Activated T-helper 2 cell treated with anti-CD3 and anti-CD28 coated beads, Interferon-gamma antibody, Interleukin-2, Interleukin-4, amounts not matched to agents 10 μg/mL and 5 μg/mL and 100 μg/mL, durations not matched to agents 14 hours and 24 hours and 36 hours (primary cell): ENCODE measurements at regions of chr4 and their contacts with region 1.

Region 1: DNA sequence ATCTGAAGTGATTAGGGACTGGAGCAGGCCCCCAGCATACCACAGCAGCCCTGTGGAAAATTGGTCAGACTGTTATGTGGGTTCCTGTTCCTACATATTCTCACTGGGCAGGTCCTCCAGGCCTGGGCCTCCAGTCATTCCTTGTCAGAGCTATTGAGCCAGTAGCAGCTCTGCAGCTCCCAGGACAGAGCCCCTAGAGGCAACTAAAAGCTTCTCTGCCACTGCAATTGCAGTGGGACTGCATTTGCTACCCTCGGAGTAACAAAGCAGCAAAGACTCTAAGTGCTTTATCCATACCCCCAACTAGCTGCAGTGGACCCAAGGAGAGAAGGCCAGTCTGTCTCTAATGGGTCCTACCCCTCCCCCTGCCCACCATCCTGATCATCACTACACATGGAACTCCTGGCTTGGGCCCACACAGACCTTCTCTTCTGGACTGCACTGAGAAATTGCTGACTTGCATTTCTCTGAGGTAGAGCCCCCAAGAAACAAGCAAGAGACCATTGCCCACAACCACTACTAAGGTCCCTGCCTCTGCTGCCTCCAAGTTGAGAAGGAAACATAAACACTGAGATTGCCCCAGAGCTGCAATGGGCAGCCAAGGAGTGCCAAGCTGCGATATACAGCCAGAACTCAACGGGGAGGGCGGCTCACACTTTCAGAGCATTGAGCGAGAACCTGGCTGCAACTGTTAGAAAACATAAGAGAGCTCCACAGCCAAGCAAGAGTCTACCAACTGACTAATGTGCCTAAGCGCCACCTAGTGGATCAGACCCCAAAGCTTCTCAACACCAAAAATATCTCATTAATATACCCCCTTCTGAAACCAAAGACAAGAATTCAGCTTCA is 738.7 kb upstream of the NDST4 start:
- DNase-seq: no peak
- H3K4me3 Mint-ChIP-seq: no peak overlapping the region
- H3K27ac Mint-ChIP-seq: no peak overlapping the region
- H3K4me1 Mint-ChIP-seq: no peaks in the 10 kb centered on the region
- H3K27me3 Mint-ChIP-seq: no peaks in the 10 kb centered on the region

Region 2: DNA sequence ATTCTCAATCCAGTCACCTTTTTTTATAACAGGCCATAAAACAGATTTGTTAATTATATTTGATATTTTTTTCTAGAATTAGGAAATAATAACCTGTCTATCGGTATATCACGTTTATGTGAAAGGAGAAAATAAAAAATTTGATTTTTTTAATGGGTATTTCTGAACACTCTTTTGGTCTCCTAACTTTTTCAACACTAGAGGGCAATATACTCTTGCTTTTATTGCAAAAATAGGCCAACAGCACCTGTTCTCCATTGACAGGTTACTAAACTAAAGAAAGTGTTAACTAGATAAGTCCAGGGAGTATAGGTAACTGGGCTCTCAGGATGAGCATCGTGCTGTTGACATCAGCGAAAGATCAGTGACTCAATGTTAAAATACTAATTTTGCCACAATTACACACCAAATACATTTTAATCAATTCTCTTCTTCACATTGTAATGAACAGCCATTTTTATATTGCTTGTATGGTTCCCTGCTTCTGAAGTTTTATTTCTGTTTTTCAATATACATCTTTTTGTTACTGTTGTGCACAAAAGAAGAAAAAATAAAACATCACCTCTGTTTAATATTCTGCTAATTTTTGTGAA is 761.6 kb before region 1 on chr4:
- intact Hi-C with region 1: loop called (anchors 5 kb)
- DNase-seq: no peak
- H3K4me3 Mint-ChIP-seq: no peak overlapping the region
- H3K27ac Mint-ChIP-seq: no peak overlapping the region
- H3K4me1 Mint-ChIP-seq: no peaks in the 10 kb centered on the region
- H3K27me3 Mint-ChIP-seq: no peaks in the 10 kb centered on the region

Region 3: DNA sequence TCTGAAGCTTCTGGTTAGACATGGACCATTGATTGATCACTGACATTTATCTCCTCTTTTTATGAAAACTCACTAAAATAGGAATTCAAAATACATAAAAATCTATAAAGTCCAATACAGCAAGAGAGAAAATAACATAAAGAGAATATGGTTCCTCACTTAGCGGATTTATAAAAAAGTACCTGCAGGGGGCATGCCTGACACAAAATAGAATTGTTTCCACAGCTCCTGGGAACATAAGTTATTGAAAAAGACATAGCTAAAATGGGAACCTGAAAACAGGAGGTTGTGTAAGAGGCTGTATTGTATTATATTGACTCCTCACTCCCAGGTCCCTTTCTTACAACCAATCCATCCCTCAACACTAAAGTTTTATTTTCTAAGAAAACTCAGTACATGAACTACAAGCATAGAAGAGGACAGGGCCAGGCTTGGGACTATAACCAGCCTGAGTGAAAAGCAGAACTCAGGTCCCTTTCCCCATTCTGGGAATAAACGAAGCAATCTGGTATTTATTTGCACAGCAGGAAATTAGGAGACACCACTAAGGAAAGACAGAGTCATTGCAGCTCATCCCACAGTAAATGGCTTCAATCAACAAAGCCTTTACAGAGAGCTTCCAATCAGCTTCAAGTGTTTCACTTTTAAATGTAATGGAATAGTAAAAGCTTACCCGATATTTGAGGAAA is 617.6 kb before region 1 on chr4:
- intact Hi-C with region 1: loop called (anchors 5 kb)
- DNase-seq: no peak
- H3K4me3 Mint-ChIP-seq: no peak overlapping the region
- H3K27ac Mint-ChIP-seq: no peak overlapping the region
- H3K4me1 Mint-ChIP-seq: no peaks in the 10 kb centered on the region
- H3K27me3 Mint-ChIP-seq: no peaks in the 10 kb centered on the region

Region 4: DNA sequence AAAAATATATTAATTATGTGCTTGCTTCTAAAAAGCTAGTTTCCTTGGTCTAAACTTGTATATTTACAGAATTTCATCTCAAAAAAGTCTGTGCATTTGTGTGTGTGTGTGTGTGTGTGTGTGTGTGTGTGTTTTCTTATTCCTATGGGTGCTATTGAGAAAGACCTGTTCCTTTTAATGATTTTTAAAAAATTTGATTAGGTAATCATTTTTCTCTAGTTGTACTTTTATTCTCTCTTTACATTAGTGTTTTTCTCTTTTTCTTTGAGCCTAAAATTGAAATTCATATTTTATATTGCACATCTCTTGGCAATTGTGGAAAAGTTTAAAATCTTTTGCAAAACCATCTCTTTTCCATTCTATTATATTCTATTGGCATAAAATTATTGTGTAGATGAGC is 48.3 kb before region 1 on chr4:
- intact Hi-C with region 1: no loop called
- DNase-seq: no peak
- H3K4me3 Mint-ChIP-seq: no peak overlapping the region
- H3K27ac Mint-ChIP-seq: no peak overlapping the region
- H3K4me1 Mint-ChIP-seq: no peaks in the 10 kb centered on the region
- H3K27me3 Mint-ChIP-seq: no peaks in the 10 kb centered on the region

Region 5: DNA sequence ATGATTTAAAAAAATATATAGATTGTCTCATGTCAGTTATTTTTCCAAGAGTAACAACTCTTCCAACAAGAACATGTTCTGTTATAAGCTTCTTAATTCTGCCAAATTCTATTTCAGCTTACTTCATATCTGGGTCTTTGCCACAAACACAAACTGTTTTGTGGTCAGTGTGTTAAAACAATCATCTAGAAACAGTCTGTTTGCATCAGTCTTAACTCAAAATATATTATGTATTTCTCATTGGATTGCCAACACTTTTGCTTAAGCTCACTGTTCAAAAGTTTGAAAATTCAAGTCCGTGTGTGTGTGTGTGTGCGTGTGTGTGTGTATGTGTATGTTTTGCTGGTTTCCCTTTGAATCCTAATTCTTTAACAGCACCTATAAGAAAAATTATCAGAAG is 13.6 kb after region 1 on chr4:
- intact Hi-C with region 1: no loop called
- DNase-seq: no peak
- H3K4me3 Mint-ChIP-seq: no peak overlapping the region
- H3K27ac Mint-ChIP-seq: no peak overlapping the region
- H3K4me1 Mint-ChIP-seq: no peaks in the 10 kb centered on the region
- H3K27me3 Mint-ChIP-seq: no peaks in the 10 kb centered on the region

Region 6: GRCh38 chr4:116328261-116328860 is 476.2 kb after region 1 on chr4:
- intact Hi-C with region 1: no loop called
- DNase-seq: no peak
- H3K4me3 Mint-ChIP-seq: no peak overlapping the region
- H3K27ac Mint-ChIP-seq: no peak overlapping the region
- H3K4me1 Mint-ChIP-seq: no peaks in the 10 kb centered on the region
- H3K27me3 Mint-ChIP-seq: no peaks in the 10 kb centered on the region

Region 7: GRCh38 chr4:116839826-116840225 is 987.7 kb after region 1 on chr4:
- intact Hi-C with region 1: no loop called
- DNase-seq: no peak
- H3K4me3 Mint-ChIP-seq: no peak overlapping the region
- H3K27ac Mint-ChIP-seq: no peak overlapping the region
- H3K4me1 Mint-ChIP-seq: no peaks in the 10 kb centered on the region
- H3K27me3 Mint-ChIP-seq: no peaks in the 10 kb centered on the region